ENCODE measurements at regions of chr1 and their contacts with region 1.

Region 1: GRCh38 chr1:171984850-171985485 is 143.7 kb downstream of the DNM3 start:
- DNase-seq: peak in 1 of 2 experiments; percentile 71
- H3K4me3 ChIP-seq: no peak overlapping the region
- H3K4me1 ChIP-seq: no peaks in the 10 kb centered on the region
- H3K27me3 ChIP-seq: no peaks in the 10 kb centered on the region

Region 2: DNA sequence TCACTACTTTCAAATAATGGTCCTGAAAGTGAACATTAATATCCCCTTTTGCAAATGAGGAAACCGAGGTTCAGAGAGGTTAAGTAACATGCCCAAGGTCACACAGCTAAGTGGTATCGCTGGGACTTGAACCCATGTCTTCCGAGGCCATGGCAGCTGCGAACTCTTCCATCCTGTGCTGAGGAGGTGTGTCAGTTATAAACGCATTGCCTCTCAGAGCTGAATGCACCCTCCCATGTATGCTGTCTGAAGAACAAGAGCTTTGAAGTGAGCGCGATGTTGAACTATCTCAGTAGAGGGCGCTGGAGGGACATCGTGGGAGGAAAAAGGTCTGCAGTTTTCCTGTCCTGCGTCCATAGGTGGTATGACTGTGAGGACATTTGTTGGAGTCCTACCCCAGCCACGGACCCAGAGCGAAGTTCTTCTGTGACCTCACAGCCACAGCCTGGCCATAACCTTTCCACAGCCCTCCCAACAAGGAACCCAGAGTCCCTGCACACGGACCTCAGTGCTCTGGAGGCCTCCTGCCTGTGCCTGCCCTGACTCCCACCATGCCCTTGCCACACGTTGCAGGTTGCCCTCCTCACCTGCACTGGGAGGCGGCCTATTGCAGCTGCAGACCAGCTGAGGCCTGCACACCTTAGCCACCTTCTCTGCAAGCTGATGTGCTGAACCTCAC is 340.0 kb before region 1 on chr1:
- in situ Hi-C with region 1: loop called (anchors 10 kb)
- DNase-seq: peak; percentile 86 to 89
- H3K4me3 ChIP-seq: no peak overlapping the region
- H3K4me1 ChIP-seq: 0 out of 2 replicates have a peak, but pooled peaks cover 2% of the 10 kb centered on the region
- H3K27me3 ChIP-seq: no peaks in the 10 kb centered on the region

Region 3: DNA sequence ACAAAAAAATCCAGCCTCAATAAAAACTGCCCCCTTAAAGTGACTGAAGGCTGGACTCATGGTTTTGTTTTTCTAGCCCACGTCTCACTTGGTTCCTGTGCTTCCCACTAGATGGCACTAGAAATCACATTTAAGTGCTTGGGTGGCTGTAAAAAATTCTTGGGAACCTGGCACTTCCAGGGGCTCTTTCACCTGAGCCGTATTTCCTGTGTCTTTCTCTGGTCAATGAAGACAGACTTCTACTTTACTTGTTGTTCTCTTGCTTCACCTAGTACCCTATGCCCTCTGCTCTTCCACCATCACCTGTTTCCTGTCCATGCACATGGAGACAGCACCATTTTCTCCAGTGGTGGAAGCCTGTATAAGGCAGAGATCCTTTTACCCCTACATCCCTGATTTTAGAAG is 183.5 kb before region 1 on chr1:
- in situ Hi-C with region 1: loop called (anchors 10 kb)
- DNase-seq: peak; percentile 51 to 68
- H3K4me3 ChIP-seq: no peak overlapping the region
- H3K4me1 ChIP-seq: no peaks in the 10 kb centered on the region; the same call in 1 of the 2 replicates
- H3K27me3 ChIP-seq: no peaks in the 10 kb centered on the region

Region 4: DNA sequence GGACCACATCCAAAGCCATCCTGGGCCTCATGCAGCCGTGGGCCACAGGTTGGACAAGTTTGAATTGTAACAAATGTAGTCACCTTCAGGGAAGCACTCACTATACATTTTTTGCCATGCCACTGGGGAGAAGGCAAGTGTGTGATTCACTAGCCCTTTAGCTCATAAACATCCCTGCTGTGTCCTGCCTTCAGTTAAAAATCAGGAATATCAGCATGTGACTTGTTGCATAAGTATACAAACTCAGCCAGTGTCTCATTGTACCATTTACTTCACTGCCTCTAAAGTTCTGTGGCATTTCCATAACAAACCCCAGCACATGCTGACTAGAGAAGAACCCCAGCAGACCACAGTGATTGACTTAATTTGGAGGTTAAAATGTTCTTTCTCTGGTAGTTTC is 293.5 kb after region 1 on chr1:
- in situ Hi-C with region 1: no loop called
- DNase-seq: no peak
- H3K4me3 ChIP-seq: no peak overlapping the region
- H3K4me1 ChIP-seq: no peaks in the 10 kb centered on the region
- H3K27me3 ChIP-seq: no peaks in the 10 kb centered on the region